ENCODE measurements at regions of chrX and their contacts with region 1.

Region 1: DNA sequence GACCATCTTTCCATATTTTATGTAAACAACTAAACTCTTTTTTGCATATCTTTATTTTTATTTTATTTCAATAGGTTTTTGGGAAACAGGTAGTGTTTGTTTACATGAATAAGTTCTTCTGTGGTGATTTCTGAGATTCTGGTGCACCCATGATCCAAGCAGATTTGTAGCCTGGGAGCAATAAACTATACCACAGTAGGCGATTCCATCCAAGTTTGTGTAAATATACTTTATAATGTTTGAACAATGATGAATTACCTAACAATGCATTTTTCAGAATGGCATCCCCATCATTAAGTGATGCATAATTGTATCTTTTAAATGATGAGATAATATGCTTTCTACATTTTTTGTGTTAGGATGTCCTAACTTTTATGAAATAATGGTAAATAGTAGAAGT is 39.2 kb upstream of the CYSLTR1 start:
- DNase-seq: no peak
- H3K4me3 ChIP-seq: no peak overlapping the region
- H3K27ac ChIP-seq: no peak overlapping the region
- H3K4me1 ChIP-seq: no peaks in the 10 kb centered on the region
- H3K27me3 ChIP-seq: no peaks in the 10 kb centered on the region
- CTCF ChIP-seq: no peak
- EP300 ChIP-seq: no peak
- POLR2A ChIP-seq: no peak

Region 2: GRCh38 chrX:78455901-78456300 is 89.3 kb after region 1 on chrX:
- intact Hi-C with region 1: loop called (anchors 10 kb)
- DNase-seq: no peak
- H3K4me3 ChIP-seq: no peak overlapping the region
- H3K27ac ChIP-seq: no peak overlapping the region
- H3K4me1 ChIP-seq: peaks cover 0 to 15% (median 0%) of the 10 kb centered on the region in 4 donors
- H3K27me3 ChIP-seq: peaks cover 0 to 4% (median 0%) of the 10 kb centered on the region in 4 donors
- CTCF ChIP-seq: no peak
- EP300 ChIP-seq: no peak
- POLR2A ChIP-seq: no peak

Measured in esophagus muscularis mucosa (tissue), 4 donors.